A673 (cell line): ENCODE measurements at regions of chr7 and their contacts with region 1.

Region 1: DNA sequence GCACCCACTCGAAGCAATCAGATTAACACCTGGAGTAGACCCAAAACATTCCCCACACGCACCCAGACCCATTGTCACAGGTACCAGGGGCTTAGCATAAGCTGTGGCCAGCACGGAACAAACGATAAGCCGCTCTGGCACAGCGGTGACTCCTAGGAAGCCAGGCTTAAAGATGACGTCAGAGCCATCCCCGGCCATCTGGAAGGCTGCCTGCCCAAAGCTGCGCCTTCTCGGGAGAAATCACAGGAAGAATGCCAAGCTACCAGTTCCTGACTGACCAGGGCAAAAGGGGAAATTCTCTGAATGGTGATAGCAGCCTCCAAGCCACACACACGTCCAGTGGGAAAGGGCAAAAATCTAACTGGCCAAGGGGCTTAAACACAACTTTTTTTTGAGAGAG is 13.0 kb upstream of the WIPI2 start:
- DNase-seq: peak; percentile 60
- H3K4me3 ChIP-seq: no peak overlapping the region
- H3K27ac ChIP-seq: no peak overlapping the region
- H3K4me1 ChIP-seq: no peaks in the 10 kb centered on the region
- H3K27me3 ChIP-seq: no peaks in the 10 kb centered on the region
- CTCF ChIP-seq: no peak

Region 2: DNA sequence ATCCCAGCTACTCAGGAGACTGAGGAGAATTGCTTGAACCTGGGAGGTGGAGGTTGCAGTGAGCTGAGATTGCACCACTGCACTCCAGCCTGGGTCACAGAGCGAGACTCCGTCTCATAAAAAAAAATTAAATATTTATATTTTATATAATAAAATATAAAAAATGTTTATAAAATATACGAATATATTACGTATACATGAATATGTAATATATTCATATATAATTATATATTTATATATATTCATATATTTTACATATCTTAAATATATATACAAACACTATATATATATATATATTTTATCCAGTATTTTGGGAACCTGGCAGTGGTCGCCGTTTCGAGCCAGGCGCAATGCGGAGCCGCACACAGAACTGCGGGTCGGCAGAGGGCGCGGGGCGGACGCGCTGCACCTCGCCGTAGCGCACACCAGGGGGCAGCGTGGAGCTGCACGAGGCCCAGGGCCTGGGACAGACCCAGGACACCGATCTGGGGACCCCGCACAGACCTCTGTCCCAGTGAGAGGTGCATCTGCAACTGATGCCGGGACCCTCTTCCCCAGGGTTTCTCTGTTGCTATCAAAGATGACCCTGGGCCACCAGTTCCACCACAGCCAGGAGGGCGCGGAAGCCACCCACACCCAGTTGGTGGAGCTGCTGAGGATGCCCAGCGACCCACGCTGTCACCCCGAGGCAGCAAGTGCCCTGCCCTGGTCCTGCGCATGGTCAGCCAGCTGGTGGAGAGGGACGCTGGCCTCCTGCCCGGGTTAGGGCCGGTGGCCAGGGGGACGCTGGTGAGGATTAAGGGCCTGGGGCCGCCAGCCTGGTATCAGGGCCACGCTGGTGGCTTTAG is 379.0 kb before region 1 on chr7:
- CTCF ChIA-PET with region 1: interaction called, 6 read pairs
- POLR2A ChIA-PET with region 1: no interaction called
- intact Hi-C with region 1: loop called (anchors 10 kb)
- DNase-seq: peak; percentile 58
- H3K4me3 ChIP-seq: no peak overlapping the region
- H3K27ac ChIP-seq: no peak overlapping the region
- H3K4me1 ChIP-seq: no peaks in the 10 kb centered on the region
- H3K27me3 ChIP-seq: no peaks in the 10 kb centered on the region
- CTCF ChIP-seq: peak; percentile 81

Region 3: GRCh38 chr7:5139998-5140397 is 37.1 kb before region 1 on chr7:
- CTCF ChIA-PET with region 1: no interaction called
- POLR2A ChIA-PET with region 1: no interaction called
- intact Hi-C with region 1: loop called (anchors 1 kb)
- DNase-seq: peak; percentile 54
- H3K4me3 ChIP-seq: no peak overlapping the region
- H3K27ac ChIP-seq: no peak overlapping the region
- H3K4me1 ChIP-seq: no peaks in the 10 kb centered on the region
- H3K27me3 ChIP-seq: no peaks in the 10 kb centered on the region
- CTCF ChIP-seq: peak; percentile 60